SK-N-SH (cell line): ENCODE measurements at regions of chr17 and their contacts with region 1.

Region 1: DNA sequence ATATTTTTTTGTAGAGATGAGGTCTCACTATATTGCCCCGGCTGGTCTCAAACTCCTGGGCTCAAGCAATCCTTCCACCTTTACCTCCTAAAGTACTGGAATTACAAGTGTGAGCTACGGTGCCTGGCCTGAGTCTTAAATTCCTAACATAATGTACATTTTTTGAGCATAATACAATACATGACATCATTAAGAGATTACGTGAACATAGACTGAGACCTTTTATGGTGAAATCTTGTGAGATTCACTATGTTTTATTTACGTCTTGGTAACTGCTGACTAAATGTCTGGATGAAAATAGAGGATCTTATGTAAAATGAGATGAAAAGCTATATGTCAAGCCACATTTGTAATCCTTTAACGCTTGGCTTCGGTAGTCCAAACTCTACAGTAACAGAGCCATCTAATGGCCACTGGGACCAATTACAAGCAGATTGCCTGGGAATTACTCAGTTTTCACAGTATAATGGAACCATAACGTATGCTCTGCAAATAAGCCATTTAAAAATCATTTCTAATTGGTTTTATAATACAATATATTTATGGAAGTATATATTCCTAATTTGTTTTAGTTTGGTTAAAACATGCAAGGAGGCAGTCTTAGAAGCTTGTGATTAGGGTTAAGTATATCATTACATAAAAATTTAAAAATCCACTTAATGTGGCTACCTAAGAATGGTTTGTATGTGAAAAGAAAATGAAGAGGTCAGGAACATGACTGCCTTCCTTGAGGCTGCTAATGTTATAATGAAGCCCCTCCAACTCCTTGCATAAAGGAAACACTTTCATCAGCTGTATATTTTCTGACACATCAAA is 8.1 kb upstream of the EFCAB13 start:
- DNase-seq: peak; percentile 80
- H3K4me3 ChIP-seq: no peak overlapping the region
- H3K27ac ChIP-seq: peak overlapping the region in 1 of 2 experiments; percentile 67; a peak in 2 of 4 replicates
- H3K4me1 ChIP-seq: peaks cover 1 to 18% of the 10 kb centered on the region in 2 experiments; a peak in 3 of 4 replicates
- H3K27me3 ChIP-seq: no peaks in the 10 kb centered on the region
- CTCF ChIP-seq: peak; percentile 99
- EP300 ChIP-seq: no peak
- RAD21 ChIP-seq: peak; percentile 100

Region 2: GRCh38 chr17:47208744-47209488 is 106.7 kb before region 1 on chr17 and contains the start of gene MYL4:
- CTCF ChIA-PET with region 1: interaction called, 11 read pairs
- POLR2A ChIA-PET with region 1: no interaction called
- DNase-seq: no peak
- H3K4me3 ChIP-seq: no peak within 1 kb of the TSS
- H3K27ac ChIP-seq: no peak within 1 kb of the TSS
- H3K4me1 ChIP-seq: no peaks in the 10 kb centered on the region
- H3K27me3 ChIP-seq: no peaks in the 10 kb centered on the region
- CTCF ChIP-seq: no peak
- EP300 ChIP-seq: no peak
- RAD21 ChIP-seq: no peak
- polyA plus RNA-seq, gene MYL4: not detected in 2 replicates

Region 3: DNA sequence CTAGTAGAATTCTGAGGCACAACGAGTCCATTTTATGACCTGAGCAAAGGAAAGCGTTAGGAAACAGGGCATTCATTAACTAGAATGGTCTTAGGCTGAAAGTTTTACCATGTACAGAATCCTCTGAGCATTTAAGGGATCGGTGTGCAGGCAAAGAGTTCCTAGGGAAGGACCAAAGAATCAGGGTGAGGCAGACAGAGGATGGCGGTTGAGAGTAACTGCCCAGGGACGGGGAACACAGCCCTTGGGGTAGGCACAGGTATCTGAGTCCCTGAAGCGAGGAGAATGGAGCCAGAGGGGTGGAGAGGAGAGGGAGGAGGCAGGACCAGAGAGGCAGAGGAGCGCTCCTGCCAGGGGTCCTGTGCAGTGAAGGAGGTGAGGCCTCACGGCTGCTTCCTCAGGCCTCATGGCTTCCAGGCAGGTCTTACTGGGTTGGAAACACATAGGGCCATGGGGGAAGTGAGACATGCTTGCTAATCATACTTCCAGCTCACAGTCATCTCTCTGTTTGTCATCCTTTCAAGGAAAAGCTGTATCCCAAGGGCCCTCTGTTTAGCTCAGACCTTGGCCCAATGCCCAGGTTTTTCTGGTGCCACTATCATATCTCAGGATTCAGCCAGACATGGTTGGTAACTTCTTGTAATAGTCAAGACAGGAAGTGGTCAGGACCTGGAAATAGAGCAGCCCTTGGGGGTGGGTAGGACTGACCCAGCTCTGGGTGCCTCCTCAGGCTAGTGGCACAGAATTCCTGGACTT is 75.9 kb before region 1 on chr17:
- CTCF ChIA-PET with region 1: interaction called, 279 read pairs
- POLR2A ChIA-PET with region 1: no interaction called
- DNase-seq: peak; percentile 77
- H3K4me3 ChIP-seq: no peak overlapping the region
- H3K27ac ChIP-seq: peak overlapping the region; percentile 82 to 91
- H3K4me1 ChIP-seq: peaks cover 15% of the 10 kb centered on the region in 2 experiments
- H3K27me3 ChIP-seq: no peaks in the 10 kb centered on the region
- CTCF ChIP-seq: no peak
- EP300 ChIP-seq: peak in 1 of 2 experiments; percentile 92; a peak in 2 of 4 replicates
- RAD21 ChIP-seq: no peak

Region 4: DNA sequence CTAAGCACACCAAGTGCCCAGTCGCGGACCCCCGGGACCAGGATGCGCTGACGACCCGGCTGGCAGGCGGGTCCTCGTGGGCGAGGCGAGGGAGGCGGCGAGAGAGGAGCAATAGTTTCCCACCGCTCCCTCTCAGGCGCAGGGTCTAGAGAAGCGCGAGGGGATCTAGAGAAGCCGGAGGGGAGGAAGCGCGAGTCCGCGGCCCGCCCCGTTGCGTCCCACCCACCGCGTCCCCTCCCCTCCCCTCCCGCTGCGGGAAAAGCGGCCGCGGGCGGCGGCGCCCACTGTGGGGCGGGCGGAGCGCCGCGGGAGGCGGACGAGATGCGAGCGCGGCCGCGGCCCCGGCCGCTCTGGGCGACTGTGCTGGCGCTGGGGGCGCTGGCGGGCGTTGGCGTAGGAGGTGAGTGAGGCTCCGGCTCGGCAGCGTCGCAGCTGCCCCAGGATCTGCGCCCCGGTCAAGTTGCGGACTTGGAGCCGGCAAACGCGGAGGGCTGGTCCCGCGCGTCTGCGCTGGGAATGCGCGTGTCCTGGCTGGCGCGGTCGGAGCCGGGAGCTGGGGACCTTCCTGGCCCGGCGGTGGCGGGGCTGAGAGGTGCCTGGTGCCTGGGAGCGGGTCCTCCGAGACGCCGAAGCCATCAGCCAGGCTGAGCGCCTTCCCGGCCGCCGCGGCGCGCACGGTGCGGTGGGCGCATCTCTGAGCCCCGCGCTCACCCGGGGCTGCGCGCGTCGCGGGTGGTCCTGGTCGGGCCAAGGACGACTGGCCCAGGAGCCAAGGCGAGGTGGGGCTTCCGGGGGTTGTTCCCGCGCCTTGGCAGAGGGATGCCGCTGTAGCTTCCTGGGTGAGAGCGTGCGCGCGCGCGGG is 61.9 kb before region 1 on chr17 and contains the start of gene ITGB3:
- CTCF ChIA-PET with region 1: interaction called, 84 read pairs
- POLR2A ChIA-PET with region 1: no interaction called
- DNase-seq: peak; percentile 96
- H3K4me3 ChIP-seq: peak within 1 kb of the TSS; percentile 64 to 72
- H3K27ac ChIP-seq: peak within 1 kb of the TSS in 1 of 2 experiments; percentile 26; a peak in 1 of 4 replicates
- H3K4me1 ChIP-seq: peaks cover 4 to 9% of the 10 kb centered on the region in 2 experiments; a peak in 1 of 4 replicates
- H3K27me3 ChIP-seq: no peaks in the 10 kb centered on the region
- CTCF ChIP-seq: peak; percentile 56
- EP300 ChIP-seq: no peak
- RAD21 ChIP-seq: peak; percentile 50
- polyA plus RNA-seq, gene ITGB3: 4.4 and 4.6 TPM in 2 replicates

Region 5: DNA sequence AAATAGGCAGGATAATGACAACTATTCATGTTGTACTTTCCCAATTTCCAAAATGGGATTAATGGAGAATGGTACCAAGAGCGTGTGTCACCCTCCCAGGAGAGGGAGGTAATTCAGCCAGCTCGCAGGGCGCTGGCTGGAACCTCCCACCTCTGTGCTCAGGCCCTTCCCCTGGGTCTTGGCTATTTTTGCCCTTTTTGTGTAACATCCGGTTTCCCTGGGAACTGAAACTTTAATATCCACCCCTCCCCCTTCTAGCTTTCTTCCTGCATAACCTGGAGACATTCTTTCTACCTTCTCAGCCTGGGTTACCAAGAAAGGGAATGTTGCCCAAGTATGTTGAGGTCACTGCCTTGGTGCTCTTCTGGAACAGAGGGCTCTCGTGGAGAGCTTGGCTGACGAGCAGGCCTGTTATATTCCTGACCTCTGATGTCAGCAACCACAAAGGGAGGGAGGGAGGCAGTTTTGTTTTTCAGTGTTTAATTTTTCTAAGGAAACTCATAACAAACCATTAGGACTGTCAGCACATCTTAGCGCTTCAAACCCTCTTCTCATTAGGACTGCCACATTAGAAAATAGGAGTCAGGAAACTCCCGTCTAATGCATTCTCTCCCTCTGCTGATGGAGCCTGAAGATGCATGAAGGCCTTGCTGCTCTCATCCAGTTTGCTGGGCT is 36.5 kb before region 1 on chr17:
- CTCF ChIA-PET with region 1: interaction called, 28 read pairs
- POLR2A ChIA-PET with region 1: no interaction called
- DNase-seq: no peak
- H3K4me3 ChIP-seq: no peak overlapping the region
- H3K27ac ChIP-seq: peak overlapping the region in 1 of 2 experiments; percentile 75; a peak in 2 of 4 replicates
- H3K4me1 ChIP-seq: peaks cover 28 to 44% of the 10 kb centered on the region in 2 experiments
- H3K27me3 ChIP-seq: no peaks in the 10 kb centered on the region
- CTCF ChIP-seq: no peak
- EP300 ChIP-seq: peak in 1 of 2 experiments; percentile 82; a peak in 1 of 4 replicates
- RAD21 ChIP-seq: no peak

Region 6: GRCh38 chr17:47305302-47305923 is 10.2 kb before region 1 on chr17:
- CTCF ChIA-PET with region 1: interaction called, 39 read pairs
- POLR2A ChIA-PET with region 1: no interaction called
- DNase-seq: no peak
- H3K4me3 ChIP-seq: no peak overlapping the region
- H3K27ac ChIP-seq: peak overlapping the region in 1 of 2 experiments; percentile 50; a peak in 2 of 4 replicates
- H3K4me1 ChIP-seq: peaks cover 4 to 10% of the 10 kb centered on the region in 2 experiments; a peak in 2 of 4 replicates
- H3K27me3 ChIP-seq: no peaks in the 10 kb centered on the region
- CTCF ChIP-seq: no peak
- EP300 ChIP-seq: peak in 1 of 2 experiments; percentile 84; a peak in 2 of 4 replicates
- RAD21 ChIP-seq: no peak

Region 7: DNA sequence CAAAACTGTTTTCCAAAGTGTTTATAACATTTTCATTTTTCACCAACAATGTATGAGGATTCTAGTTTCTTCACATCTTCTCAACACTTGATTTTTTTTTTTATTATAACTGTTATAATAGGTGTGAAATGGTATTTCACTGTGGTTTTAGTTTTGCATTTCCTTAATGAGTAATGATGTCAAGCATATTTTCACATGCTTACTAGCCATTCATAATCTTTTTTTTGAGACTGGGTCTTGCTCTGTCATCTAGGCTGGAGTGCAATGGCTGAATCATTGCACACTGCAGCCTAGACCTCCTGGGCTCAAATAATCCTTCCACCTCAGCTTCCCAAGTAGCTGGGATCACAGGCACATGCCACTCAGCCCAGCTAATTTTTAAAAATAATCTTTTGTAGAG is 73.2 kb after region 1 on chr17:
- CTCF ChIA-PET with region 1: no interaction called
- POLR2A ChIA-PET with region 1: no interaction called
- DNase-seq: no peak
- H3K4me3 ChIP-seq: no peak overlapping the region
- H3K27ac ChIP-seq: no peak overlapping the region
- H3K4me1 ChIP-seq: no peaks in the 10 kb centered on the region
- H3K27me3 ChIP-seq: no peaks in the 10 kb centered on the region
- CTCF ChIP-seq: no peak
- EP300 ChIP-seq: no peak
- RAD21 ChIP-seq: no peak